Activated CD4-positive, alpha-beta T cell treated with anti-CD3 and anti-CD28 coated beads, Interleukin-2, amount 10 ng/mL, durations not matched to agents 24 days and 14 days (primary cell): ENCODE measurements at regions of chr10 and their contacts with region 1.

Region 1: GRCh38 chr10:102713814-102714620 is at the start of gene ARL3:
- DNase-seq: peak; percentile 98
- H3K4me3 Mint-ChIP-seq: peak within 1 kb of the TSS; percentile 80
- H3K27ac Mint-ChIP-seq: peak within 1 kb of the TSS; percentile 93
- H3K4me1 Mint-ChIP-seq: peaks cover 41% of the 10 kb centered on the region
- H3K27me3 Mint-ChIP-seq: no peaks in the 10 kb centered on the region
- total RNA-seq, gene ARL3: 6.3 and 6.4 TPM in 2 replicates

Region 2: GRCh38 chr10:102245101-102245931 is 468.7 kb before region 1 on chr10 and contains the start of gene GBF1:
- intact Hi-C with region 1: loop called (anchors 1 kb)
- DNase-seq: peak; percentile 97
- H3K4me3 Mint-ChIP-seq: peak within 1 kb of the TSS; percentile 100
- H3K27ac Mint-ChIP-seq: peak within 1 kb of the TSS; percentile 94
- H3K4me1 Mint-ChIP-seq: peaks cover 40% of the 10 kb centered on the region
- H3K27me3 Mint-ChIP-seq: peaks cover 14% of the 10 kb centered on the region
- total RNA-seq, gene GBF1: 45.2 and 47.7 TPM in 2 replicates

Region 3: GRCh38 chr10:102660888-102661657 is 52.9 kb before region 1 on chr10:
- intact Hi-C with region 1: loop called (anchors 5 kb)
- DNase-seq: peak; percentile 91
- H3K4me3 Mint-ChIP-seq: peak overlapping the region; percentile 72
- H3K27ac Mint-ChIP-seq: peak overlapping the region; percentile 88
- H3K4me1 Mint-ChIP-seq: peaks cover 37% of the 10 kb centered on the region
- H3K27me3 Mint-ChIP-seq: no peaks in the 10 kb centered on the region

Region 4: DNA sequence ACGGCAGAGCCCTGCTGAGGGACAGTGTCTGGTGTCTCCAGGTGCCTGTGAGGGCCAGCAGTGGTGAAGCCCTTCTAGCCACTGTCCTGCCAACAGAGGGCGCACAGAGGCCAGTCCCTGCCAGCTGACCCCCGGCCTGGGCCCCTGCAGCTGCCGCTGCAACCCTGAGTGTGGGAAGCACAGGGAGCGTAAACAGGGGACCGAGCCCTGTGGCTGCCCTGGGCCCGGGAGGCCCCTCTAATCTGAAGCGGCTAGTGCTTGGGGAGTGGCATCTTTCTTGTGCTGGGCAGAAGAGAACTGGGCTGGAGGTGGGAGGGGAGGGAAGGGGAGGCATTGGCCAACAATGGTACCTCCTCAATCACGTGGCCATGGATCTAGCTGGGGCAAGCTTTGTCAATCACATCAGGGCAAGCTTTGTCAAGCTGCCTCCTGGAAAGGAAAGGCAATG is 35.2 kb before region 1 on chr10:
- intact Hi-C with region 1: loop called (anchors 5 kb)
- DNase-seq: peak; percentile 67
- H3K4me3 Mint-ChIP-seq: no peak overlapping the region
- H3K27ac Mint-ChIP-seq: no peak overlapping the region
- H3K4me1 Mint-ChIP-seq: peaks cover 30% of the 10 kb centered on the region
- H3K27me3 Mint-ChIP-seq: no peaks in the 10 kb centered on the region

Region 5: DNA sequence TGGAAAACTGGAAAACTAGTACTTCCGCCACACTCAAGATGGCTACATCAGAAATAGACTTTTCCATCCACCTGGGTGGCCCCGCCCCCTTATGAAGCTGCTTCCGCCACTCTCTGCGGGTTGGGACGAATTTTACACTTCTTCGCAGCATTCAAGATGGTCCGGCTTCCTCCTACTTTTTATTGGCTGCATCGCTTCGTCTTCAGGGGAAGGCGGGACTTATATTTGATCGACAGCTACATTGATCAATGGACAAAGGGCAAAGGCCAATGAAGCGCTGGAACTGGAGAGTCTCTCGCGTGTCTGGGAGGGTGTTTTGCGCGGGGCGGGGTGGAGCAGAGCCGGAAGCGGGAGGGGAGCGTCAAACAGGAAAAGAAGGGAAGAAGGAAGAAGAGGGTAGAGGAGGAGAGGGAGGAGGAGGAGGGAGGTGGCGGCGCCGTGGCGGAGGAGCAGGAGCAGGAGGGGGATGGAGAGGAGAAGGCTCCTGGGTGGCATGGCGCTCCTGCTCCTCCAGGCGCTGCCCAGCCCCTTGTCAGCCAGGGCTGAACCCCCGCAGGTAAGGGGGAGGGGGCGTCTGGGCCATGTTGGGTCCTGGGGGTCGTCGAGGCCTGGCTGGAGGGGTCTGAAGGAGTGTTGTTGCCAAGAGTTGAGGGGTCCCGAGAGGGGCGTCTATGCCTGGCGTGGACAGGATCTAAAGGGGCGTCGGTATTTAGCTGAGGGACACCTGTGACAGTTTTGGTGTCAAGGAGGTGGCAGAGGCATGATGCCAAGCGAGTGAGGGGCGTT is 29.8 kb after region 1 on chr10 and contains the start of gene WBP1L:
- intact Hi-C with region 1: loop called (anchors 1 kb)
- DNase-seq: peak; percentile 98
- H3K4me3 Mint-ChIP-seq: peak within 1 kb of the TSS; percentile 83
- H3K27ac Mint-ChIP-seq: peak within 1 kb of the TSS; percentile 81
- H3K4me1 Mint-ChIP-seq: peaks cover 38% of the 10 kb centered on the region
- H3K27me3 Mint-ChIP-seq: no peaks in the 10 kb centered on the region
- total RNA-seq, gene WBP1L: 15.6 and 15.8 TPM in 2 replicates

Region 6: GRCh38 chr10:102853944-102854694 is 140.1 kb after region 1 on chr10 and contains the start of gene BORCS7:
- intact Hi-C with region 1: loop called (anchors 1 kb)
- DNase-seq: peak; percentile 96
- H3K4me3 Mint-ChIP-seq: peak within 1 kb of the TSS; percentile 98
- H3K27ac Mint-ChIP-seq: peak within 1 kb of the TSS; percentile 97
- H3K4me1 Mint-ChIP-seq: peaks cover 13% of the 10 kb centered on the region
- H3K27me3 Mint-ChIP-seq: no peaks in the 10 kb centered on the region
- total RNA-seq, gene BORCS7: 8.1 and 9.8 TPM in 2 replicates

Region 7: DNA sequence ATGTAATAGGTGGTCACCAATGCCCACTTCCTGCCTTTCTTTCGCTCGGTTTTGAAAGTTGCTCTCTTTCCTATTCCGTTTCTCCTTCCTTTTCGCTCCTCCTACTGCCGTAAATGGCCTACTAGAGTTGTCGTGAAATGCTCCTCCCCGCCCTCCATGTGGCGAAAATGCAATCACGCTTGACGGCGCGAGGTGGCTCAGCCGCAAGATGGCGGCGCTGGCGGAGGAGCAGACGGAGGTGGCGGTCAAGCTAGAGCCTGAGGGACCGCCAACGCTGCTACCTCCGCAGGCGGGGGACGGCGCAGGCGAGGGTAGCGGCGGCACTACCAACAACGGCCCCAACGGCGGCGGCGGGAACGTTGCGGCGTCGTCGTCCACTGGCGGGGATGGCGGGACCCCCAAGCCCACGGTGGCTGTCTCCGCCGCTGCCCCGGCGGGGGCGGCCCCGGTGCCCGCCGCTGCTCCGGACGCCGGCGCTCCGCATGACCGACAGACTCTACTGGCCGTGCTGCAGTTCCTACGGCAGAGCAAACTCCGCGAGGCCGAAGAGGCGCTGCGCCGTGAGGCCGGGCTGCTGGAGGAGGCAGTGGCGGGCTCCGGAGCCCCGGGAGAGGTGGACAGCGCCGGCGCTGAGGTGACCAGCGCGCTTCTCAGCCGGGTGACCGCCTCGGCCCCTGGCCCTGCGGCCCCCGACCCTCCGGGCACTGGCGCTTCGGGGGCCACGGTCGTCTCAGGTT is 653.9 kb after region 1 on chr10 and contains the start of gene TAF5:
- intact Hi-C with region 1: loop called (anchors 5 kb)
- DNase-seq: peak; percentile 97
- H3K4me3 Mint-ChIP-seq: peak within 1 kb of the TSS; percentile 93
- H3K27ac Mint-ChIP-seq: peak within 1 kb of the TSS; percentile 92
- H3K4me1 Mint-ChIP-seq: peaks cover 12% of the 10 kb centered on the region
- H3K27me3 Mint-ChIP-seq: peaks cover 4% of the 10 kb centered on the region
- total RNA-seq, gene TAF5: 11.9 and 12.1 TPM in 2 replicates